ENCODE measurements at regions of chr14 and their contacts with region 1.

Region 1: DNA sequence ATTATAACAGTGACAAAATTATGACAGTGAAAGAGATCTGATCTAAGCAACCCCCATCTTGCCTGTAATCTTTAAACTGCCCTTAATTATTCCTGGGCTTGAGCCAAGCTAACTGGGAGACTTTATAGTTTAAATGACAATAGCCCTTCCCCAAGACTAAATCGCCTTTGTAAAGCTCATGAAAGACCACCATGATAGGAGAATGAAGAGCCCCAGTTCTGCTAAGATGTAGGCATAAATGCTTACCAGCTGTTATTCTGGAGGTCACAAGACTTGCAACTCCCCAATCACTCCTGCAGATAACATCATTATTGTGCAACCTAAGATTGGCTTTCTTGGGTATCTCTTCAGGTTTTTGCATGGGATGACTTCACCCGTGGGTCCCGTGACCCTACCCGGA is 599.7 kb downstream of the KCNH5 start:
- DNase-seq: no peak
- H3K4me3 ChIP-seq: no peak overlapping the region
- H3K27ac ChIP-seq: no peak overlapping the region
- H3K4me1 ChIP-seq: no peaks in the 10 kb centered on the region
- H3K27me3 ChIP-seq: no peaks in the 10 kb centered on the region
- CTCF ChIP-seq: no peak
- POLR2A ChIP-seq: no peak

Region 2: GRCh38 chr14:63276492-63277342 is 831.1 kb after region 1 on chr14:
- intact Hi-C with region 1: loop called (anchors 5 kb)
- DNase-seq: no peak
- H3K4me3 ChIP-seq: no peak overlapping the region
- H3K27ac ChIP-seq: peak overlapping the region in 1 of 2 donors; percentile 10
- H3K4me1 ChIP-seq: no peaks in the 10 kb centered on the region
- H3K27me3 ChIP-seq: no peaks in the 10 kb centered on the region
- CTCF ChIP-seq: peak; percentile 75 to 87 (median 83)
- POLR2A ChIP-seq: no peak

Measured in breast epithelium (tissue), 4 donors.